Activated T-helper 1 cell treated with anti-CD3 and anti-CD28 coated beads, Interleukin-12 subunit alpha, Interleukin-12 subunit beta, Interleukin-2, Interleukin-4 antibody, amounts not matched to agents 30 ng/mL and 10 ng/mL and 1 ng/mL, durations not matched to agents 14 hours and 24 hours and 36 hours (primary cell): ENCODE measurements at regions of chr10 and their contacts with region 1.

Region 1: GRCh38 chr10:75235375-75236177 is at the start of gene COMTD1:
- DNase-seq: peak; percentile 91
- H3K4me3 Mint-ChIP-seq: peak within 1 kb of the TSS; percentile 84
- H3K27ac Mint-ChIP-seq: peak within 1 kb of the TSS; percentile 93
- H3K4me1 Mint-ChIP-seq: peaks cover 27% of the 10 kb centered on the region
- H3K27me3 Mint-ChIP-seq: no peaks in the 10 kb centered on the region
- total RNA-seq, gene COMTD1: 36.4 and 36.9 TPM in 2 replicates

Region 2: DNA sequence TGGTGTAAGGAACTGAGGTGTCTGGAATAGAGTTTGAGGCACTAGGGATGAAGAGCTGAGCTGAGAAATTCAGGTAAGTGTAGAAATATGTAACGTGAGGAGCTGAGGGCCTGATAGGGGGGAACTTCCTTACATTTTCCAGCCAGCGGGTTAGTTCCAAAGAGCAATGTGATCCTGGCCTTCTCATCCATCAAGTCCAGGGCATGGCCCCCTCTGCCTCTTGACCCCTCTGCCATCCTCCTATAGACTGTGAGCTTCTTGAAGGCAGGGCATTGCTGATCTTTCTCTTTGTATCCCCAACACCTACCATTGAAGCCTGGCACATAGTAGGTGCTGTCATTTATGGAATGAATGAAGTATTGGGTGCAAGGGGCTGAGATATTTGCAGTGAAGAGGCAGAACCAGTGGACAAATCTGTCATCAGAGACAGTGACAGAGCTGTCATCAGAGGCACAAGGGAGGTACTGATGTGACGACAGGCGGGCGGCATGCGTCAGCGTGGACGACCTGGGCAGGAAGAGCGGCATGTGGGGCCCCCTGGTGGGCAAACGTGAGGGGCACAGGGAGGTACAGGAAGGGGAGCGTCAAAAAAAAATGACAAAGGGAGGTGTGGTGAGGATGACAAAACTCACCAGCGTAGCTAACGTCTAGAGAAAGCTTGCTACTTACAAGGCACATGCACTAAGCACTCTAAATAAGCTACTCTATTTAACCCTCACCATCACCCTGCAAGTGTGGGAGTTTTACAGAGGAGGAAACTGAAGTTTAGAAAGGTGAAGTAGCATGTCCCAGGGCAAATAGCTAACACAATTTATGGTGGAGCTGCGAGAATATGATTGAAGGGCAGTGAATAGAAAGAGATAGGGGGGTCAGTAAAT is 1356.0 kb before region 1 on chr10:
- intact Hi-C with region 1: loop called (anchors 10 kb)
- DNase-seq: peak; percentile 90
- H3K4me3 Mint-ChIP-seq: no peak overlapping the region
- H3K27ac Mint-ChIP-seq: peak overlapping the region; percentile 53
- H3K4me1 Mint-ChIP-seq: peaks cover 53% of the 10 kb centered on the region
- H3K27me3 Mint-ChIP-seq: peaks cover 16% of the 10 kb centered on the region

Region 3: DNA sequence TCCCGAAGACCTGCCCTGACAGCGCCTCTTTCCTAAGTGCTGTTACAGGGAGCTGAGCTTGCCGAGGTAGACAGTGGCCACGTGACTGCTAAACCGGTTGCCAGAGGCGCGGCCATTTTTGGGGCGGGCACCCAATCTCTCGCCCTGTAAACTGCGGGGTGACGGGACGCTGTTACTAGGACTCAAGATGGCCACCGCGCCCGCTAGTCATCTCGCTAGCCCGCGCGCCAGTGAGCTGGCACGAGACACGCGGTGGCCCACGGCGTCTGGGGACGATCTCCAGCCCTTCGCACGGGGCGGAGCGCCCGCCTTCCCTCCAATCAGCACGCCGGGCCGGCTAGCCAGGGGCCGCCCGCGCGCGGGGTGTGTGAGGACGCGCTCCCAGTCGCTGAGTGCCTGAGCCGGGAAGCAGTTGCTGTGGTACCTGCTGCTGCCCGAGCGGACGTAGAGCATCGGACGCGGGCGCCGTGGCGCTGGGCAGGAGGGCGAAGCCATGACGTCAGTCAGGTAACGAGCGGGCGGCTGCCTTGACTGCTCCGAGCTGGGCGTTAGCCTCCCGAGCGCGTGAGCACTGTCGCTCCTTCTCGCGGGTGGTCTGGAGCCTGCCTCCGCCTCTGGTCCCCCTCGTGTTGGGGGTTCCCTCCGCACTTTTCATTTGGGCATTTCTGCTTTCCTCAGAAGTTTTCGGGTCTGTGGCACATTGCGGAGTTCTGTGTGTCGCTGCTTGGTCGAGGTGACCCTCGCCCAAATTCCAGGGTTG is 1059.0 kb before region 1 on chr10:
- intact Hi-C with region 1: loop called (anchors 1 kb)
- DNase-seq: peak; percentile 93
- H3K4me3 Mint-ChIP-seq: peak overlapping the region; percentile 93
- H3K27ac Mint-ChIP-seq: peak overlapping the region; percentile 88
- H3K4me1 Mint-ChIP-seq: peaks cover 45% of the 10 kb centered on the region
- H3K27me3 Mint-ChIP-seq: no peaks in the 10 kb centered on the region

Region 4: GRCh38 chr10:74262856-74263255 is 972.7 kb before region 1 on chr10:
- intact Hi-C with region 1: loop called (anchors 1 kb)
- DNase-seq: no peak
- H3K4me3 Mint-ChIP-seq: no peak overlapping the region
- H3K27ac Mint-ChIP-seq: no peak overlapping the region
- H3K4me1 Mint-ChIP-seq: peaks cover 13% of the 10 kb centered on the region
- H3K27me3 Mint-ChIP-seq: no peaks in the 10 kb centered on the region

Region 5: DNA sequence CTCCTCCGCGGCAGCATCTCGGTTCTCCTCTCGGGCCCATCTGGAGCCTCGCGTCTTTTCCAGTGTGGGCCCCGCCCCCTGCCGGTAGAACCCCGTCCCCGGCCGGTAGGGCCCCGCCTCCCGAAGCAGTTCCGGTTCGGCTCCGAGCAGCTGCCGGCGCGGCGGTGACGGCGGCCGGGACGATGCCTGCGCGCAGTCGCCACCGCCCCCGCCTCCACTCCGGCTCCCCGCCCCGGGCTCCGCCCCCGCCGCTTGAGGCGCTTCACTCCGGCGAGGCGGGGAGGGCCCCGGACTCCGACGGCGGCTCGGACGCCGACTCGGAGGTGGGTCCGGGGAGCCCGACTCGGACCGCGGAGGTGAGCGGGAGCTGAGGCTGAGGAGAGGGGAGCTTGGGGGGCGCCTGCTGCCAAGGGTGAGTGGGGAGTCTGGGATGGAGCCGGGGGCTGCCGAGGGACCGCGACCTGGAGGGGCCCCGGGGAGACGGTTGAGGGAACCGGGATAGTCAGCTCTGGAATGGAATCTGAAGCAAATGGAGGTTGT is 124.1 kb before region 1 on chr10 and contains the start of gene SAMD8:
- intact Hi-C with region 1: loop called (anchors 1 kb)
- DNase-seq: peak; percentile 97
- H3K4me3 Mint-ChIP-seq: peak within 1 kb of the TSS; percentile 95
- H3K27ac Mint-ChIP-seq: peak within 1 kb of the TSS; percentile 99
- H3K4me1 Mint-ChIP-seq: peaks cover 50% of the 10 kb centered on the region
- H3K27me3 Mint-ChIP-seq: no peaks in the 10 kb centered on the region
- total RNA-seq, gene SAMD8: 16.2 and 16.5 TPM in 2 replicates

Region 6: GRCh38 chr10:75210282-75211006 is 25.1 kb before region 1 on chr10 and contains the start of gene VDAC2:
- intact Hi-C with region 1: loop called (anchors 1 kb)
- DNase-seq: peak; percentile 95
- H3K4me3 Mint-ChIP-seq: peak within 1 kb of the TSS; percentile 92
- H3K27ac Mint-ChIP-seq: peak within 1 kb of the TSS; percentile 100
- H3K4me1 Mint-ChIP-seq: peaks cover 30% of the 10 kb centered on the region
- H3K27me3 Mint-ChIP-seq: no peaks in the 10 kb centered on the region
- total RNA-seq, gene VDAC2: 220 and 224 TPM in 2 replicates

Region 7: DNA sequence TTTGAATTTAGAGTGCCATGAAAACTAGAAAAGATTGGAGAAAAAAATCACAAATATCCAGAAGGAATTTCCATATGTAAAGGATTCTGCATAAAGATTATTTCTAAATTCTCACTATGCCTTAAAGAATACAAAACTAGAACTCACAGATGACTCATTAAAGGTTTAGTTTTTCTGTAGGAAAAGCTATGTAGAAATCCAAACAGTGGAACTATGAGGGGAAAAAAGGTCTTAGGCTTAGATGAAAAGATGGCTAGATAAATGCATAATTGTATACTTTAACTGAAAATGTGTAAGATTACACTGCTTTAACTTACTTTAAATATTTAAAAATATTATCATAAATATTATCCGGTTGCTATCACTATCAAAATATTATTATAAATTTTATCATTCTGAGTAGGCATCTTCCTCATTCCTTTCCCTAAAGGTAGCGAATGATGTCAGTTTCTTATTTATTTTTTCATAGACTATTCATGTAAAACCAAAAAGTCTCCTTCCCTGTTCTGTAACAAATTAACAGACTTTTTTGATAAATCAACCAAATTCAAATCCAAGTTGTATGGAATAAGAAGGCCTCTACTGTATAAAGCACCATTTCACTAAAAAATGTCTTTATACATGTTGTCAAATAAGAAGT is 69.3 kb after region 1 on chr10:
- intact Hi-C with region 1: no loop called
- DNase-seq: no peak
- H3K4me3 Mint-ChIP-seq: no peak overlapping the region
- H3K27ac Mint-ChIP-seq: no peak overlapping the region
- H3K4me1 Mint-ChIP-seq: peaks cover 7% of the 10 kb centered on the region
- H3K27me3 Mint-ChIP-seq: peaks cover 4% of the 10 kb centered on the region